Sigmoid colon (tissue), 7 donors: ENCODE measurements at regions of chrX and their contacts with region 1.

Region 1: DNA sequence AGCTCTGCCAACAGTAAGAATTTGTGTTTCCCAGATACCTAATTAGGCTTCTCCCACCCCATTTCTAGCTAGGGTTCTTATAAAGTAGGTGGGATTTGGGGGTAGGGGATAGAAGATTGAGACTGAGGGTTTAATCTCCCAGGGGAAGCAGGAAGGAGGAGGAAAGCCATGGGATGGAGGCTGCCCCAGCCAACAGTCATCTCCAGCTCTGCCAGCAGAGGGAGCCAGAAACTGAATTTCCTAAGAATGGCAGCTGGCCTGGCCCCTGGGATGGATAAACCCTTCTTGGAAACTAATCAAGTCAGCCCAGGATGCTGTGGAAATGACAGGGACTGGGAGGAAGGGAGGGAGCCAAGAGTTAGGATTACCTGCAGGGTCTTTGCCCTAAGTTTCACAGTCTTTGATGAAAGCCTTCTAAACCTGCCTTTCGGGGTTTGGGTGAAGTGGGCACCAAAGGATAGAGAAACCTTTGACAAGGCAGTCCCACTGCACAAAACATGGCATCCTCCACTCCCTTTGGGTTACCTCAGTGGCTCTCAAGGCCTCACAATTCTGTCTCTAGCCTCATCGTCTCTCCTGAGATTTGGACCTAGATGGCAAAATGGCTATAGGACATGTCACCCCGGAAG is 6.7 kb upstream of the ERCC6L start:
- DNase-seq: no peak
- H3K4me3 ChIP-seq: no peak overlapping the region
- H3K27ac ChIP-seq: no peak overlapping the region
- H3K4me1 ChIP-seq: no peaks in the 10 kb centered on the region
- H3K27me3 ChIP-seq: no peaks in the 10 kb centered on the region
- CTCF ChIP-seq: peak in 3 of 4 experiments; percentile 26 to 57 (median 47)
- EP300 ChIP-seq: no peak
- POLR2A ChIP-seq: no peak

Region 2: DNA sequence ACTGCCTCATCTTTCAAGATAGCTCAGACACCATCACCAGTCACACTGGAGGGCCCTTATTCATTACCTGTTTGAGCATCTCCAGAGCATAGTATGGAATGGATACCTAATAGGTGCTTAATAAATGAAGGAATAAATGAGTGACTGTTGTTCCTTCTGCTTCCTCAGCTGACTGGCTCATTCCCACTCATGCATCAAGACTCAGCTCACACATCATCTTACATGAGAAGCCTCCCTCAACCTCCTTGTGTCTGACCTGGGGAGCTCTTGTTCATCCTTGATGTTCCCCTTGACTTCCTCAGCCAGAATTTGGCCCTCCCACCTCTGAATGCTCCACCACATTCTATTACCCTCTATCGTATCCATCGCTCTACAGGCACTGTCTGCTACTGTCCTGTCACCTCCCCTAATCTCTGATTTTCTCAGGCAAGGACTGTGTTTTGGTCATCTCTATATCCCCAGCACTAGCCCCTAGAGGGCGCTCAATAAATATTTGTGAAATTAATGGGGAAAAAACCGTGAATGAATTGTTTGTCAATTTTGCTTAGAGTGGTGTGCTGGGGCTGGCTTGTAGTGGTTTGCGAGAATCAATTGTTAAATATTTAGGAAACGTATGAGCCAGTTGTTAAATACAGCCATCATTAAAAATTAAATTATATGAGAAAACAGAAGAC is 246.6 kb before region 1 on chrX:
- intact Hi-C with region 1: no loop called
- DNase-seq: no peak
- H3K4me3 ChIP-seq: no peak overlapping the region
- H3K27ac ChIP-seq: no peak overlapping the region
- H3K4me1 ChIP-seq: peaks cover 0 to 6% (median 5%) of the 10 kb centered on the region in 4 donors
- H3K27me3 ChIP-seq: peaks cover 0 to 2% (median 0%) of the 10 kb centered on the region in 3 donors
- CTCF ChIP-seq: peak; percentile 5 to 59 (median 37)
- EP300 ChIP-seq: no peak
- POLR2A ChIP-seq: no peak

Region 3: GRCh38 chrX:72094894-72095293 is 150.7 kb before region 1 on chrX:
- intact Hi-C with region 1: no loop called
- DNase-seq: no peak
- H3K4me3 ChIP-seq: no peak overlapping the region
- H3K27ac ChIP-seq: no peak overlapping the region
- H3K4me1 ChIP-seq: peaks cover 0 to 4% (median 0%) of the 10 kb centered on the region in 4 donors
- H3K27me3 ChIP-seq: no peaks in the 10 kb centered on the region
- CTCF ChIP-seq: no peak
- EP300 ChIP-seq: no peak
- POLR2A ChIP-seq: no peak

Region 4: DNA sequence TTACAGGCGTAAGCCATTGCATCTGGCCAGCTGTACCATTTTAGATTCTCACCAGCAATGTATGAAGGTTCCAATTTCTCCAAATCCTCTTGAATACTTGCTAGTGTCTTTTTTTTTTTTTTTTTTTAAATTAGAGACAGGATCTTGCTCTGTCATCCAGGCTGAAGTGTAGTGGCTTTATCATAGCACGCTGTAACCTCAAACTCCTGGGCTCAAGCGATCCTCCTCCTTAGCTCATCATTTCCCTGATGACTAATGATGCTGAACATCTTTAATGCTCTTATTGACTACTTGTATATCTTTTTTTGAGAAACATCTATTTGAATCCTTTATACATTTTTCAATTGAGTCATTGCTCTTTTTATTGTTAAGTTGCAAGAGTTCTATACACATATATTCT is 286.8 kb after region 1 on chrX:
- intact Hi-C with region 1: loop called (anchors 5 kb)
- DNase-seq: no peak
- H3K4me3 ChIP-seq: no peak overlapping the region
- H3K27ac ChIP-seq: no peak overlapping the region
- H3K4me1 ChIP-seq: peaks cover 0 to 13% (median 6%) of the 10 kb centered on the region in 4 donors
- H3K27me3 ChIP-seq: no peaks in the 10 kb centered on the region
- CTCF ChIP-seq: no peak
- EP300 ChIP-seq: no peak
- POLR2A ChIP-seq: no peak